Heart left ventricle (tissue), 16 donors: ENCODE measurements at regions of chr10 and their contacts with region 1.

Region 1: DNA sequence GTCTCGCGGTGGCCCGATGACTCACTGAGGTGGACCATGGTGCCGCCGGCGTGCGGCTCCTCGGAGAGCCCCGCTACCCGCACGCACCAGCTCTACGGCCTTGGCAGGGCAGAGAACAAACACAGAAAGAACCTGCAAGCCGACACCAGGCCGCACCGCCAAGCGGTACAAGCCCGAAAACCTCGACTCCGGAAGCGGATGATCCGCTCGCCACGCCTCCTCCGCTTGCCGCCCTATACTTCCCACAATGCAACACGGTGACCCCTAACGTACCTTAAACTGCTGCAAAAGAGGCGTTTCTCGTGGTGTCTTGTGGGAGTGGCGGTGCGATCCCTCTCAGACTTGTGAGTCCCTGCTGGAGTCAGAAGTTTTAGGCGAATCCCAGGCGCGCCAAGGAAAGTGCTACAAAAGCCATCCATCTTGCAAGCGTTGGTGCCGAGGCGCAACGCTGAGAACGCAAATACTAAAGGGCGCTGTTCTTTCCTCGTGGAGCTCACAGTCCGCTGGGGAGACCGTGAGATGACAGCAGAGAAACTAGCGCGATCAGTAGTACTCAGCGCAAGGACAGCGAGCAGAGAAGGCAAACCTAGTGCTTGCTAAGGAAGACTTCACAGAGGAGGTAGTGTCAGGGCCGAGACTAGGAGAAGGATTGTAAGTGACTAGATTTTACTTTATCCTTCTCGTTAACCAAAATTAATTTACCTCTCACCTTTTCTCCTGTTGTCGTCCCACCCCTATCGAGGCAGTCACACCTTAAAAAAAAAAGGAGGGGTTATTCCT is at the start of gene MRPS16:
- DNase-seq: peak; percentile 92 to 96 (median 95)
- ATAC-seq: peak; percentile 98 to 99 (median 99)
- H3K4me3 ChIP-seq: peak within 1 kb of the TSS; percentile 64 to 97 (median 84)
- H3K27ac ChIP-seq: peak within 1 kb of the TSS; percentile 75 to 97 (median 88)
- H3K4me1 ChIP-seq: peaks cover 3 to 34% (median 24%) of the 10 kb centered on the region in 12 donors
- H3K27me3 ChIP-seq: no peaks in the 10 kb centered on the region
- CTCF ChIP-seq: peak in 2 of 12 donors; percentile 7 to 10
- POLR2A ChIP-seq: peak in 1 of 2 donors; percentile 79
- total RNA-seq, gene MRPS16: 56.5 to 112 (median 101) TPM

Region 2: DNA sequence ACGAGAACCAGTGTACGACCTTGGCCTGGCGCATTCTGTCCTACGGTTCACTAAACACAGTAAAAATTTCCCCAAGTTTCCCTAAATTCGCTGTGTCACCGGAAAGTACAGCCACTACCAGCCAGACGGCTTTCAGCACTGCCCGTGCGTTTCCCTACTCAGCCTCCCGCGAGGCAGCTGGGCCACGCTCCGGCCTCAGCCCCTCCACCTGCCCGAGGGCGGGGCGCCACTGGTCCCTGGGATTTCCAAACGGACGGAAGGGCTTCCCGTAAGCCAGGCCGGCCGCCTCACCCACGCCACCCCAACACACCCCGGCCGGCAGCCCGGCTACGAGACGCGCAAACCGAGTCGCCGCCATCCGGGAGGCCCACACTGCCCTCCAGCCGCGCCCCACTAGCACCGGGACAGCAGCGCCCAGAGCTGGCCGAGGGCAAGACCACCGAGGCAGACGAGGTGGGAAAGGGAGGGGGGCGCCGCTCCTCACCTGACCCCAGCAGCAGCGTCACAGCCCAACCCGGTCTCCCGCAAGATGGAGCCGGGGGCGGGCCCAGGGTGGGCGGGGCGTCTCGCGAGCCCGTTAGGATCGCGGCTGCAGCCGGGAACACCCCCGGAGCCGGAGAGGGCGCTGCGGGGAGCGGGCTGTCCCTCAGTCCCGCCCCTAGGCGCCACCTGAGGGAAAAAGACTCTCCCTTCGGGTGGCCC is 161.0 kb after region 1 on chr10 and contains the start of gene ANXA7:
- intact Hi-C with region 1: loop called in 1 of 10 experiments (anchors 5 kb)
- DNase-seq: peak; percentile 95 to 96 (median 96)
- ATAC-seq: peak; percentile 97 to 99 (median 98)
- H3K4me3 ChIP-seq: peak within 1 kb of the TSS; percentile 67 to 99 (median 89)
- H3K27ac ChIP-seq: peak within 1 kb of the TSS; percentile 92 to 98 (median 95)
- H3K4me1 ChIP-seq: peaks cover 0 to 40% (median 23%) of the 10 kb centered on the region in 12 donors
- H3K27me3 ChIP-seq: no peaks in the 10 kb centered on the region
- CTCF ChIP-seq: peak; percentile 10 to 69 (median 37)
- POLR2A ChIP-seq: peak; percentile 20 to 80
- total RNA-seq, gene ANXA7: 100 to 170 (median 126) TPM

Region 3: DNA sequence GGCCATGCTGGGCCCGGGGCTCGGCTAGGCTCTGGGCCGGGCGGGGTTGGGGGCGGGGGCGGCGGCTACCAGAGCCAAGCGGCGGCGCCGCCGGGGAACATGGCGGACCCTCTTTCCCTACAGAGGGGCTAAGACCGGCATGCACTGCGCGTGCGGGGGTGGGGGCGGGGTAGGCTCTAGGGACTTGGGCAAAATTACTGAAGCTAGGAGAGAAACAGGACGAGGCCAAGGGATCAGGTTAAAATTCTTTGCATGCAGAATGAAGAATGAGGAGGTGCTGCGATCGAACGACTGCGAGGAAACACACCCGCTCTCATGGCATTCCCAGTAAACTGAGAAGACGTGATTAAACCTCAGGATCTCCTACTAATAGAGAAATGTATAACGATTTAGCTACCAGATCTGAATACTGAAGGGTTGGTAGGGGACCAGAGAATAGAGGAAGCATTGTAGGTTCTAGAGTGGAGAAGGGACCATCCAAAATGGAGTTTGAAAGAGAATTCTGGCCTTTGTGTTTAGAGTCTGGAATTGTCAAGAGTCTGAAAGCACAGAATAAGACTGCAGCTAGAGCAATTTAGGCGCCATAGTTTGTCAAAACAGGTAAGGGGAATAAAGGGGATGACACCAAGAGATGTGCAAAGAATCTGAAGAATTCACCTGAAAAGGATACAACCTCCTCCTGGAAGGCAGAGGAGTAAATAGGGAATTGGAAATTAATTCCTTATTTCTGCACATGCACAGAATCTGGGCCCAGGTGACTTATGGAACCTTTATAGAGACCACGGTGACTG is 243.4 kb after region 1 on chr10 and contains the start of gene PPP3CB:
- intact Hi-C with region 1: loop called in 1 of 10 experiments (anchors 10 kb)
- DNase-seq: peak; percentile 91 to 94 (median 94)
- ATAC-seq: peak; percentile 91 to 95 (median 92)
- H3K4me3 ChIP-seq: peak within 1 kb of the TSS; percentile 59 to 99 (median 80)
- H3K27ac ChIP-seq: peak within 1 kb of the TSS; percentile 85 to 99 (median 94)
- H3K4me1 ChIP-seq: peaks cover 6 to 50% (median 33%) of the 10 kb centered on the region in 12 donors
- H3K27me3 ChIP-seq: no peaks in the 10 kb centered on the region
- CTCF ChIP-seq: no peak
- POLR2A ChIP-seq: no peak
- total RNA-seq, gene PPP3CB: 46.6 to 77.1 (median 65.0) TPM